RWPE1 (cell line): ENCODE measurements at regions of chr11 and their contacts with region 1.

Region 1: DNA sequence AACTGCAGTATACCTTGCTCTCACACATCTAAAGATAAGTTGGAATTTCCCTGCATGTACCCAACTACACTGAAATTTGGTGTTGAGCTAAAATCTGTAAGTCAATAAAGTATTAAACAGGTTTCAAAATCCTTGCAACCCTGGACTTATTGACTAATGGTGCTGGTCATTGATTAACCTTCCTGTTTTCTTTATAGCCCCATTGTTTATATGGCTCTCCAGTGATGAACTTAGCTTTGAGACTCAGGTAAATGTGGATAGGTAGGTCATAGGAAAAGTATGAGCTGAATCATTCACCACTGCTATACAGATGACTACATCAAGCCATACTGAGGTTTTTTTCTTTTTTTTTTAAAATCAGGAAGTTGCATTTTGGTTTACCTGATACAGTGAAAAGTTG is 132.7 kb downstream of the FAT3 start:
- DNase-seq: peak; percentile 59
- H3K27ac ChIP-seq: no peak overlapping the region
- CTCF ChIP-seq: no peak

Region 2: GRCh38 chr11:93059117-93059957 is 702.0 kb after region 1 on chr11:
- CTCF ChIA-PET with region 1: no interaction called
- POLR2A ChIA-PET with region 1: interaction called, 11 read pairs
- DNase-seq: no peak
- H3K27ac ChIP-seq: no peak overlapping the region
- CTCF ChIP-seq: no peak